Left cardiac atrium (tissue), 4 donors: ENCODE measurements at regions of chr3 and their contacts with region 1.

Region 1: DNA sequence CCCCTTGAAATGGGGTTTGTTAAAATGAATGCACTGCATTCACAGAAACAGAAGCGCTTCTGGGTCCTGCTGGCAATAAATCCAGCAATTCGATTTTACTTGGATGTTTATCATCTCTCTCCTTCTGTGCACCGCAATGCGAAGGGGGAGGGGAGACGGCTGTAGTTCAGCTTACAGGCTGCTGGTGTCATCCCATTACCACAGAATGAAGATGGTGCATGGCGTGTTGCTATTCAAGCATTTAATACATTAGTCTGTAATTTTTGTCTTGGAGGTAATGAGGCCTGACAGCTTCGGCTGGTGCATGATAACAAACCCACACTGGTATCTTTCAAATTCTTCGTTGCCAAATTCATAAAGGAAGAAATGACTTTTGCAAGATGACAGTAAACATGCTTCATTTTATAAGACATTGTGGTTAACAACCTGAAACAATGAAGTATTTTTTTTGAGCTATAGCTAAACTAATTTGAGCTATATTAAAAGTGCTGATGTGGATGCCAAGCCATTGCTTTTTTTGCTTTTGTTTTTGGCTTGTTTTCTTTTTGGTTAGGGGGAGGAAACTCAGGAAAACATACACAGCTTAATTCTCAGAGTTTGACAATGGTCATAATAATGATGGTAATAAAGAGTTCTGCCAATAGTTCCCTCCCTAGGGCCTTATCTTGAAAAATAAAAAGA is 418.3 kb downstream of the OTOL1 start:
- DNase-seq: peak; percentile 33
- ATAC-seq: peak; percentile 96 to 97

Region 2: GRCh38 chr3:163132111-163132510 is 1217.2 kb after region 1 on chr3:
- intact Hi-C with region 1: loop called in 1 of 2 experiments (anchors 10 kb)
- DNase-seq: no peak
- ATAC-seq: no peak